Activated CD4-positive, alpha-beta memory T cell treated with anti-CD3 and anti-CD28 coated beads for 36 hours (primary cell): ENCODE measurements at regions of chr10 and their contacts with region 1.

Region 1: DNA sequence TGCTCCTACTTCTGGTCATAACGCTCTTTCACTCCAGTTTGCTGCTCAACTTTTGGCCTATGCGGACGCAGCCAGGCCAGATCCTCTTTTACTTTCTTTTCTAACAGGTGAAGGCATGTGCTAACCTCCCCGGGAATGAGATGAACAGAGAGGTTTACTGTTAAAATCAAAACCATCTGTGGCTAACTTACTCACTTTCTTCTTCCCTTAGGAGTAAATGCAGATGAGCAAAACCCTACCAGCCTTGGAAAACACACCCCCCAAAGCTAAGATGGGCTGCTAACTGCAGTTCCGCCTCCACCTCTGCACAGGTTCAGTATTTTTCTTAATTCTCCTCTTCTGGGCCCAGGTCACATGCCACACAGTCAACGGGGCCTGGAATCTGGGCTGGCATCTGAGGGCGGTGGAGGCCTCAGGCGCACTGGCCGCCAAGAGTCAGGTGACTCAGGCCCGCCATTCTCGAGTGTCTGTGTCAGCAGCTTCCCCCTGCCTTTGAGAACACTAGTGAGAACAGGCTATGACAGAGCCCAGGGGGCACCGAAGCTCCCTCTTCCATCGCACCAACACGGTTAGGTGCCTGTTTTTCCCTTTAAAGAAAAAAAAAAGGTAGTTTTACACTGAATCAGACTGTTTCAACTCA is 11.1 kb downstream of the FAM53B start:
- DNase-seq: peak; percentile 90
- H3K4me3 Mint-ChIP-seq: peak overlapping the region; percentile 69
- H3K27ac Mint-ChIP-seq: peak overlapping the region; percentile 91
- H3K4me1 Mint-ChIP-seq: peaks cover 91% of the 10 kb centered on the region
- H3K27me3 Mint-ChIP-seq: no peaks in the 10 kb centered on the region

Region 2: GRCh38 chr10:124641282-124642087 is 91.6 kb before region 1 on chr10:
- CTCF ChIA-PET with region 1: interaction called, 4 read pairs
- POLR2A ChIA-PET with region 1: no interaction called
- intact Hi-C with region 1: loop called (anchors 2 kb)
- DNase-seq: peak; percentile 76
- H3K4me3 Mint-ChIP-seq: peak overlapping the region; percentile 54
- H3K27ac Mint-ChIP-seq: peak overlapping the region; percentile 94
- H3K4me1 Mint-ChIP-seq: peaks cover 78% of the 10 kb centered on the region
- H3K27me3 Mint-ChIP-seq: no peaks in the 10 kb centered on the region

Region 3: DNA sequence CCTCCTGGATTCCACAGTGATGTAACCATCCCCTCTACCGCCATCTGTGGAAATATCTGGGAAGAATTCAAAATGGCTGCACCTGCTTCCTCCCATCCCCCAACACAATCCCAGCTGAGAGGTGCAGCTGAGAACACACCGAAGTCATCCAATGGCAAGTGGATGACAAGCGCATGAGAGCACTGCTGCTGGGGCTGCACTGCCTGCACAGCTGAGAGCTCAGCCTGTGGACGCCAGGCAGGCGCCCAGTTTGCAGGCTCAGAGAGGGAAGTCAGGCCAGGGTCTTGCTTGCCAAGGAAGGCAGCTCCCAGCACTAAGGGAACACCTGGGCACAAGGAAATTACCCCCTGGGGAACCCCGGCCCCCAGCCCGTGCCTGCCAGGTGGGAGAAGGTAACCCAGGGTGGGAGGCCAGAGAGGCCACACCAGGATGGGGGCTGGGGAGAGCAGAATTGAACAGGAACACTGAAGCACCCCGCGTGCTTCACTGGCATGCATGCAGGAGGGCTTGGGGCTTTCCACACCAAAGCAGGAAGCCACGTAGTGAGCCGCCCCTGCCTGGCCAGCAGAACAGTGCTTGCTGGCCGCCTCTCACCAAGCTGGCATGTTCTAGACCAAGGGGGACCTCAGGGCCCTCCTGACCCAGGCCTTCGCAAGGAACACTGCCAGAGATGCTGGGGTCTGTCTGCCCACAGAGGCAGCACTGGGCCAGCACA is 35.1 kb before region 1 on chr10:
- CTCF ChIA-PET with region 1: interaction called, 3 read pairs
- POLR2A ChIA-PET with region 1: interaction called, 13 read pairs
- intact Hi-C with region 1: no loop called
- DNase-seq: peak; percentile 75
- H3K4me3 Mint-ChIP-seq: peak overlapping the region; percentile 26
- H3K27ac Mint-ChIP-seq: peak overlapping the region; percentile 97
- H3K4me1 Mint-ChIP-seq: peaks cover 100% of the 10 kb centered on the region
- H3K27me3 Mint-ChIP-seq: no peaks in the 10 kb centered on the region

Region 4: DNA sequence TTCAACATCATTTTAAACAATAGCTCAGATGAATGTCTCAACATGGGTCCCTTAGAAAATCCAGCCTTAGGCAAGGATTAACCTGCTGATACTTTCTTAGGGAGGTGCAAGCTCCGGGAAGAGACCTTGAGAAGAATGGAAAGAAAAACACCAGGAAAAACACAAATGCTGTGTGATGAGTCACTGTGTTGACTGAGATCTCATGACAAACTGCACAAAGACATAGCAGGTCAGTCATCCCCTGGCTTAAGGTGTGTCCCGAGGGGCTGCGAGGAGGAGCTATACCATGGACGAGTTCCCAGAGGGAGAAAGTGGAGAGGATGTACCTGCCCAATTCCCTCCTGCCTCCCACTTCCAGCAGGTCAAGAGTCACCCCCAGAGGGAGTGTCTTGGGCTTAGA is 851.9 kb after region 1 on chr10:
- CTCF ChIA-PET with region 1: no interaction called
- POLR2A ChIA-PET with region 1: no interaction called
- intact Hi-C with region 1: no loop called
- DNase-seq: no peak
- H3K4me3 Mint-ChIP-seq: no peak overlapping the region
- H3K27ac Mint-ChIP-seq: no peak overlapping the region
- H3K4me1 Mint-ChIP-seq: no peaks in the 10 kb centered on the region
- H3K27me3 Mint-ChIP-seq: peaks cover 5% of the 10 kb centered on the region